ENCODE measurements at regions of chr4 and their contacts with region 1.

Region 1: GRCh38 chr4:41692717-41693345 is 55.7 kb downstream of the PHOX2B start:
- DNase-seq: peak; percentile 10
- H3K4me3 ChIP-seq: no peak overlapping the region
- H3K27ac ChIP-seq: no peak overlapping the region
- H3K4me1 ChIP-seq: no peaks in the 10 kb centered on the region
- H3K27me3 ChIP-seq: no peaks in the 10 kb centered on the region
- CTCF ChIP-seq: peak in 3 of 4 experiments; percentile 57 to 79 (median 61)
- POLR2A ChIP-seq: no peak

Region 2: GRCh38 chr4:41620594-41621256 is 72.1 kb before region 1 on chr4:
- intact Hi-C with region 1: no loop called
- DNase-seq: no peak
- H3K4me3 ChIP-seq: no peak overlapping the region
- H3K27ac ChIP-seq: no peak overlapping the region
- H3K4me1 ChIP-seq: no peaks in the 10 kb centered on the region
- H3K27me3 ChIP-seq: no peaks in the 10 kb centered on the region
- CTCF ChIP-seq: no peak
- POLR2A ChIP-seq: no peak

Region 3: GRCh38 chr4:41882625-41883347 is 190.0 kb after region 1 on chr4:
- intact Hi-C with region 1: loop called (anchors 5 kb)
- DNase-seq: peak; percentile 15
- H3K4me3 ChIP-seq: peak overlapping the region in 1 of 2 donors; percentile 15
- H3K27ac ChIP-seq: no peak overlapping the region
- H3K4me1 ChIP-seq: peaks cover 14% of the 10 kb centered on the region
- H3K27me3 ChIP-seq: peaks cover 27% of the 10 kb centered on the region
- CTCF ChIP-seq: peak; percentile 62 to 71 (median 64)
- POLR2A ChIP-seq: no peak

Measured in prostate gland (tissue), 2 donors.